ENCODE measurements at regions of chr2 and their contacts with region 1.

Region 1: GRCh38 chr2:175880-176800 is 87.7 kb downstream of the SH3YL1 start:
- DNase-seq: no peak
- ATAC-seq: no peak
- H3K4me3 ChIP-seq: no peak overlapping the region
- H3K27ac ChIP-seq: no peak overlapping the region
- H3K4me1 ChIP-seq: no peaks in the 10 kb centered on the region
- H3K27me3 ChIP-seq: peaks cover 0 to 1% (median 0%) of the 10 kb centered on the region in 3 donors
- CTCF ChIP-seq: no peak

Region 2: GRCh38 chr2:162473-163382 is 13.4 kb before region 1 on chr2:
- intact Hi-C with region 1: no loop called
- DNase-seq: no peak
- ATAC-seq: no peak
- H3K4me3 ChIP-seq: no peak overlapping the region
- H3K27ac ChIP-seq: no peak overlapping the region
- H3K4me1 ChIP-seq: no peaks in the 10 kb centered on the region
- H3K27me3 ChIP-seq: peaks cover 0 to 9% (median 3%) of the 10 kb centered on the region in 3 donors
- CTCF ChIP-seq: no peak

Region 3: DNA sequence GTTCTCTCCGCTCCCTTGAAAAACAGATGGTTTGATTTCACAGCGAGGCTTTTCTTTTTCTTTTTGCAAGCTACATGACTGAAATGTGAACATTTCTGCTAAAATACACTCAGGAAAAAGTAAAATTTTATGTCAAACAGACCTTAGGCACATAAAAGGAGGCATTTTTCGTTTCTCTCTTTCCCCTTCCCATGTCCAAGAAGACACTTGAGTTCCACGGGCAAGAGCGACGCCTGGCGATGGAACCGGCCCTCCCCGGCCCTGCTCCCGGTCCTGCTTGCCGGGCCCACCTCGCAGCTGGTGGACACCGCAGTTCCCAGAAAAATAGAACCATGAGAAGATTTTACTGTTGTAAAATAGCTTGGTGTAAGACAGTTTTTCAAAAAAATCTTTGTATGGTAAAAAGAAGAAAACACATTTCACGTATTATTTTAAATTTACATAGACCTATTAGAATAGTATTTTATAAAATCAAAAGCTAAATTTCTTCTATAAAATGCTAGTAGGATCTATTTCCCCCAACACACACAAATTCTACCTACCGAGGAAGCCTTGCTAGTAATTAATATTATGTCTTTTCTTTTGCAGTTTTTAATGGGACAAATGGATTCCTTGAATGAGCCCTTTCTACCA is 114.1 kb after region 1 on chr2:
- intact Hi-C with region 1: loop called in 1 of 2 experiments (anchors 2 kb)
- DNase-seq: peak; percentile 68 to 83
- ATAC-seq: peak; percentile 69 to 93 (median 80)
- H3K4me3 ChIP-seq: peak overlapping the region; percentile 73
- H3K27ac ChIP-seq: no peak overlapping the region
- H3K4me1 ChIP-seq: peaks cover 9% of the 10 kb centered on the region
- H3K27me3 ChIP-seq: peaks cover 0 to 48% (median 11%) of the 10 kb centered on the region in 3 donors
- CTCF ChIP-seq: peak; percentile 67

Region 4: DNA sequence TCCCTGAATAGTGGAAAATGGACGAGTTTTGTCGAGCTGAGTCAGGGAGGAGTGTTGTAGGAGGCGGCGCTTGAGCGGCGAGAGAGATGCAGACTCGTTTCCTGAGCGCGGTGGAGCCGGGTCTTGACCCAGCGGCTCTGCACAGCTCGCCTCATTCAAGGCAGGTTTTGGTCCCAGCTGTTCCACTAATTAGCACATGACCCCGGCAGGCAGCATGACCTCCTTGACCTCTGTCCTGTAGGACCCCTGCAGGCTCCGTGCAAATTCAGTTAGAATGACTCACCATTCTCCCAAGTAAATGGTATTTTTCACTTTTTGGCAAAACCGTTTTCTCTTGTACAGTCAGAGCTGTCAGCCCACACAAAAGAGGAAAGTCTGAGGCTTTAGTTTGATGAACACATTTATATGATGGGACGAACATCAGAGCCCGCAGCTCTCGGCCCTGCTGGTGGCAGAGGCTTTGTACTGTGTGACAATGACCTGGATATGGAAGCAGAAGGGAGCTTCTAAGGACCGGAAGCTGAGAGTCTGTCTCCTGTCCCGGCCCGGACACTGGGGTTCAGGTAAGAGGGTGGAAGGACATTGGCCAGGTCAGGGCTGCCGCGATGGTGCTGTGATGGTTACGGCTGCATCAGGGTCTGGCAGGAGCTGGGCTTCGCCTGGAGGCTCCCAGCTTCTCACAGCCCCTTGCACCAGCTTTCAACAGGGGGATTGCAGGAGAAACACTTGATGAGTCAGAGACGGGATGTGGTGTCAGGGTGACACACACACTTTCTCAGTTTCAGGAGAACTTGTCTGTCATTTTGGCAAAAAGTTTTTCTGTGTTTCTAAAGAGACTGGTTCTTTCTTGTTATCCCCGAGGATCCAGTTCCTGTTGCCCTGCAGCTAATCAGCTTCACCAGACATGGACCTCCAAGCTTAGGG is 141.6 kb after region 1 on chr2:
- intact Hi-C with region 1: no loop called
- DNase-seq: no peak
- ATAC-seq: no peak
- H3K4me3 ChIP-seq: no peak overlapping the region
- H3K27ac ChIP-seq: no peak overlapping the region
- H3K4me1 ChIP-seq: no peaks in the 10 kb centered on the region
- H3K27me3 ChIP-seq: peaks cover 0 to 11% (median 2%) of the 10 kb centered on the region in 3 donors
- CTCF ChIP-seq: no peak

Measured in psoas muscle (tissue), 8 donors.